CD4-positive, alpha-beta memory T cell (primary cell): ENCODE measurements at regions of chr12 and their contacts with region 1.

Region 1: GRCh38 chr12:89542912-89543592 is 17.2 kb upstream of the POC1B start:
- DNase-seq: peak; percentile 64 to 72 (median 69)
- H3K4me3 ChIP-seq: no peak overlapping the region
- H3K4me3 Mint-ChIP-seq: peak overlapping the region in 1 of 8 donors; percentile 18
- H3K27ac ChIP-seq: no peak overlapping the region
- H3K27ac Mint-ChIP-seq: peak overlapping the region in 4 of 7 donors; percentile 14 to 41 (median 36)
- H3K4me1 ChIP-seq: no peaks in the 10 kb centered on the region
- H3K4me1 Mint-ChIP-seq: peaks cover 4 to 16% (median 10%) of the 10 kb centered on the region in 4 donors
- H3K27me3 ChIP-seq: no peaks in the 10 kb centered on the region
- H3K27me3 Mint-ChIP-seq: peaks cover 0 to 3% of the 10 kb centered on the region in 2 donors

Region 2: DNA sequence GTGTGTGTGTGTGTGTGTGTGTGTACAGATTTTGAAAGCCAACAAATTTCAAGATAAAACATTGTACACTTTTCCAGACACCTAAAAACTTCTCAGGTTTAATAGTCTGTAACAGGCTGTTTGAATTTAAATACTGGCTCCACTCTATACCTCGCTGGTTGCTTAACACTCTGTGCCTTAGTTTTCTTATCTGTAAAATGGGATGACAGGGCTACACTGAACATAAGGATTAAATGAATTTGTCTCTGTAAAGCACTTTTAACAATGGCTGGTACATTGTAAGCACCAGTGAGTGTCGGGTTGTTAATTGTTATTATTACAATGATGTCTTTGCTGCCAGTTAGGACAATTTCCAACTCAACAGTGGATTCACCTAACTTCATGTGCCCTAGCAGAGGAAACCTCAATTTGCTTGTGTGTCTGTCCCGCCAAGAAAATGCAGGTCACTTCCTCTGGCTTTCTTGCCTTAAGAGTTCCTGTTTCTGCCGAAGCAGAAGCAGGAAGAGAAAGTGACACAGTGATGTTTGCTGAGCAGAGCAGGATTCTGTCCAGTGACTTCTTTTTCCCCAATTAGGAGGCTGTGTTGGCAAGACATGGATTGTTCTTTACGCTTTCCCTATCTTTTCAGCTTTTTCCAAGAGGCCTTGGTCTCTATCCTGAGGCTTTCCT is 319.6 kb after region 1 on chr12:
- CTCF ChIA-PET with region 1: interaction called, 51 read pairs
- POLR2A ChIA-PET with region 1: no interaction called
- intact Hi-C with region 1: loop called (anchors 1 kb)
- DNase-seq: peak; percentile 68 to 79 (median 75)
- H3K4me3 ChIP-seq: peak overlapping the region; percentile 26 to 39
- H3K4me3 Mint-ChIP-seq: peak overlapping the region; percentile 69 to 87 (median 82)
- H3K27ac ChIP-seq: peak overlapping the region; percentile 95
- H3K27ac Mint-ChIP-seq: peak overlapping the region; percentile 91 to 99 (median 99)
- H3K4me1 ChIP-seq: peaks cover 62% of the 10 kb centered on the region
- H3K4me1 Mint-ChIP-seq: peaks cover 56 to 81% (median 68%) of the 10 kb centered on the region in 4 donors
- H3K27me3 ChIP-seq: no peaks in the 10 kb centered on the region
- H3K27me3 Mint-ChIP-seq: no peaks in the 10 kb centered on the region

Region 3: GRCh38 chr12:90013409-90013808 is 470.4 kb after region 1 on chr12:
- CTCF ChIA-PET with region 1: interaction called, 36 read pairs
- POLR2A ChIA-PET with region 1: no interaction called
- intact Hi-C with region 1: loop called (anchors 1 kb)
- DNase-seq: peak in 4 of 5 donors; percentile 21 to 32 (median 29)
- H3K4me3 ChIP-seq: no peak overlapping the region
- H3K4me3 Mint-ChIP-seq: no peak overlapping the region
- H3K27ac ChIP-seq: no peak overlapping the region
- H3K27ac Mint-ChIP-seq: peak overlapping the region in 2 of 7 donors; percentile 31 to 65
- H3K4me1 ChIP-seq: peaks cover 3% of the 10 kb centered on the region
- H3K4me1 Mint-ChIP-seq: peaks cover 8 to 11% (median 10%) of the 10 kb centered on the region in 4 donors
- H3K27me3 ChIP-seq: no peaks in the 10 kb centered on the region
- H3K27me3 Mint-ChIP-seq: no peaks in the 10 kb centered on the region

Region 4: DNA sequence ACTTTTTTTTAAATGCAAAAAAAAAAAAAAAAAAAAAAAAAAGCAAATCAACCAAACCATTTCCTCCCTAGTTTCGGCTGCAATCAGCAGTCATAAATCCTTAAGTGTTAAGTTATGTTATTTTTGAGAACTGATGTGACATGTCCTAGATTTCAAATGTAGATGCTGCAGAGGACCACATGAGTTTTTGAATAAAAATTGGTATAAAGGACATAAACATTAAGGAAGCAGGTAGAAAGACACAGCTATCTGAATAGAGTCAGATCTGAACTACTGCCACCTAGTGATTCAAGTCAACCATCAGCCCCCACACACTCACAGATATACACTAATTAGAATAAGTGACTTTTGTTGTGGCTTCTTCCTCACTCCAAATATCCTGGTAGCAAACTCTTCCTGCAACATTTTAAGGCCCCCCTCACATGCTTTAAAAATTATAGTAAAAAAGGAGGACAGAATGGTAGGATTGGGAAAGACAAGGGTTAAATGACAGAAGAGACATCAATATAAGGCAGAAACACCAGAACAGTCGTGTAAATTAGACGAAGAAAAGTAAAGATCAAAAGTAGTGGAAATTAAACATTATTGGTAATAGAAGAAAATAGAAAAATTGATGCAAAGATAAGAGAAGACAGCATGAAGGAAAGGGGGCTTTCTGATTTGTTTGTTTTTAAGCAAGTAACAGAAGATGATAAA is 560.1 kb after region 1 on chr12:
- CTCF ChIA-PET with region 1: interaction called, 134 read pairs
- POLR2A ChIA-PET with region 1: no interaction called
- intact Hi-C with region 1: loop called (anchors 1 kb)
- DNase-seq: peak in 4 of 5 donors; percentile 42 to 54 (median 52)
- H3K4me3 ChIP-seq: no peak overlapping the region
- H3K4me3 Mint-ChIP-seq: peak overlapping the region; percentile 54 to 83 (median 80)
- H3K27ac ChIP-seq: no peak overlapping the region
- H3K27ac Mint-ChIP-seq: peak overlapping the region in 3 of 7 donors; percentile 5 to 83 (median 78)
- H3K4me1 ChIP-seq: peaks cover 14% of the 10 kb centered on the region
- H3K4me1 Mint-ChIP-seq: peaks cover 14 to 24% (median 15%) of the 10 kb centered on the region in 4 donors
- H3K27me3 ChIP-seq: no peaks in the 10 kb centered on the region
- H3K27me3 Mint-ChIP-seq: peaks cover 0 to 3% of the 10 kb centered on the region in 2 donors

Region 5: GRCh38 chr12:90253674-90254181 is 710.7 kb after region 1 on chr12:
- CTCF ChIA-PET with region 1: interaction called, 3 read pairs
- POLR2A ChIA-PET with region 1: no interaction called
- intact Hi-C with region 1: loop called (anchors 5 kb)
- DNase-seq: peak; percentile 19 to 66 (median 33)
- H3K4me3 ChIP-seq: no peak overlapping the region
- H3K4me3 Mint-ChIP-seq: peak overlapping the region in 4 of 8 donors; percentile 11 to 36 (median 25)
- H3K27ac ChIP-seq: no peak overlapping the region
- H3K27ac Mint-ChIP-seq: peak overlapping the region in 4 of 7 donors; percentile 2 to 66 (median 34)
- H3K4me1 ChIP-seq: peaks cover 11% of the 10 kb centered on the region
- H3K4me1 Mint-ChIP-seq: peaks cover 7 to 11% (median 9%) of the 10 kb centered on the region in 4 donors
- H3K27me3 ChIP-seq: no peaks in the 10 kb centered on the region
- H3K27me3 Mint-ChIP-seq: no peaks in the 10 kb centered on the region

Region 6: DNA sequence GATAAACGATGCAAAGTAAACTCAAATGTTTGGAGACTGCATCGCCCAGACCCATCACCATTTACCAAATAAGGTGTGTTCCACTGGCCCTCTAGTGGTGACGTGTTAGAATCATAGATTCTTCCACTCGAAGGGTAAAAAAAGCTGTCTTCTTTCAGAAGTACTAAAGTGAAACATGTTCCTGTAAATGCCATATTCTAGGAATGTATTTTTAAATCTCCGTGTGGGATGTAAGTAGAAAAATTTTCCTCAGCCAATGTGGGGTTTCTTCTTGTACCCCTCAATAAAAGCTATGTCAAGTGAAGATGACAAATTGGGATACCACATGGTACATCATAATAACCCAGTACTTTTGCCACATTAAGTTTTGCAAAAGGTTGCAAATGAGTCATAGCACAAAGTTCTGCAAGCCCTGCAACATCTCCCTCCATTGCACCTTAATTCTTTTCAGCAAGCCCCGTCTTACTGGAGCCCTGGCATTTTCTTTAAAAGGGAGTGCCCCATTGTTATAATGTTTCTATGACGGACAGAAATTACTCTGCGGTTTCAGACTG is 1311.2 kb after region 1 on chr12:
- CTCF ChIA-PET with region 1: interaction called, 12 read pairs
- POLR2A ChIA-PET with region 1: no interaction called
- intact Hi-C with region 1: no loop called
- DNase-seq: peak in 3 of 5 donors; percentile 6 to 21 (median 20)
- H3K4me3 ChIP-seq: no peak overlapping the region
- H3K4me3 Mint-ChIP-seq: no peak overlapping the region
- H3K27ac ChIP-seq: no peak overlapping the region
- H3K27ac Mint-ChIP-seq: no peak overlapping the region
- H3K4me1 ChIP-seq: no peaks in the 10 kb centered on the region
- H3K4me1 Mint-ChIP-seq: no peaks in the 10 kb centered on the region
- H3K27me3 ChIP-seq: no peaks in the 10 kb centered on the region
- H3K27me3 Mint-ChIP-seq: no peaks in the 10 kb centered on the region